ENCODE measurements at regions of chr18 and their contacts with region 1.

Region 1: DNA sequence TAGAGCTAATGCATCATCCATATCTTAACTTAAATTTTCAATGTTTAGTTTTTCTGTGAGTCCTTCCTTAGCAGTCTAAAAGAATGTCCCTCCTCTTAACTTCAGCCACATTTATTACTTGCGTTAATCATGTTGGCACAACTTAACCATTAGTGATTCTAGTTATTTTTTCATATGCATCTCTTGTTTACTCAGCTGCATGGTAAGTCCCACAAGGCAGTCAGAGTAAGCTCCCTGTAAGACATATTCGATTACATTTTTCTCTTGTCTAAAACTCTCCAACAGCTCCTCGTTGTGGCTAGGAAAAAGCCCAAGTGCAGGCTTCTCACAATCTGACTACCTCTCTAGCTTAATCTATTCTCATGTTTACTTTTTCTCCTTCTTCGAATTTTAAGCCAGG is 2045.3 kb upstream of the PIK3C3 start:
- DNase-seq: no peak
- H3K4me3 ChIP-seq: no peak overlapping the region
- H3K27ac ChIP-seq: no peak overlapping the region
- H3K4me1 ChIP-seq: no peaks in the 10 kb centered on the region
- H3K27me3 ChIP-seq: no peaks in the 10 kb centered on the region
- CTCF ChIP-seq: no peak
- POLR2A ChIP-seq: no peak

Region 2: GRCh38 chr18:39835303-39836030 is 74.2 kb before region 1 on chr18:
- intact Hi-C with region 1: loop called (anchors 10 kb)
- DNase-seq: no peak
- H3K4me3 ChIP-seq: no peak overlapping the region
- H3K27ac ChIP-seq: no peak overlapping the region
- H3K4me1 ChIP-seq: no peaks in the 10 kb centered on the region
- H3K27me3 ChIP-seq: no peaks in the 10 kb centered on the region
- CTCF ChIP-seq: no peak
- POLR2A ChIP-seq: no peak

Region 3: GRCh38 chr18:40652321-40652720 is 742.6 kb after region 1 on chr18:
- intact Hi-C with region 1: no loop called
- DNase-seq: no peak
- H3K4me3 ChIP-seq: no peak overlapping the region
- H3K27ac ChIP-seq: no peak overlapping the region
- H3K4me1 ChIP-seq: no peaks in the 10 kb centered on the region
- H3K27me3 ChIP-seq: no peaks in the 10 kb centered on the region
- CTCF ChIP-seq: no peak
- POLR2A ChIP-seq: no peak

Measured in breast epithelium (tissue), 4 donors.